B cell (primary cell): ENCODE measurements at regions of chr6 and their contacts with region 1.

Region 1: GRCh38 chr6:166296035-166296883 is 11.9 kb downstream of the PRR18 start:
- DNase-seq: no peak
- ATAC-seq: no peak
- H3K4me3 ChIP-seq: no peak overlapping the region
- H3K4me3 Mint-ChIP-seq: no peak overlapping the region
- H3K27ac ChIP-seq: no peak overlapping the region
- H3K27ac Mint-ChIP-seq: no peak overlapping the region
- H3K4me1 ChIP-seq: peaks cover 5 to 10% of the 10 kb centered on the region in 2 donors
- H3K4me1 Mint-ChIP-seq: peaks cover 19% of the 10 kb centered on the region
- H3K27me3 ChIP-seq: peaks cover 0 to 3% (median 0%) of the 10 kb centered on the region in 4 experiments
- H3K27me3 Mint-ChIP-seq: peaks cover 26% of the 10 kb centered on the region
- CTCF ChIP-seq: no peak

Region 2: DNA sequence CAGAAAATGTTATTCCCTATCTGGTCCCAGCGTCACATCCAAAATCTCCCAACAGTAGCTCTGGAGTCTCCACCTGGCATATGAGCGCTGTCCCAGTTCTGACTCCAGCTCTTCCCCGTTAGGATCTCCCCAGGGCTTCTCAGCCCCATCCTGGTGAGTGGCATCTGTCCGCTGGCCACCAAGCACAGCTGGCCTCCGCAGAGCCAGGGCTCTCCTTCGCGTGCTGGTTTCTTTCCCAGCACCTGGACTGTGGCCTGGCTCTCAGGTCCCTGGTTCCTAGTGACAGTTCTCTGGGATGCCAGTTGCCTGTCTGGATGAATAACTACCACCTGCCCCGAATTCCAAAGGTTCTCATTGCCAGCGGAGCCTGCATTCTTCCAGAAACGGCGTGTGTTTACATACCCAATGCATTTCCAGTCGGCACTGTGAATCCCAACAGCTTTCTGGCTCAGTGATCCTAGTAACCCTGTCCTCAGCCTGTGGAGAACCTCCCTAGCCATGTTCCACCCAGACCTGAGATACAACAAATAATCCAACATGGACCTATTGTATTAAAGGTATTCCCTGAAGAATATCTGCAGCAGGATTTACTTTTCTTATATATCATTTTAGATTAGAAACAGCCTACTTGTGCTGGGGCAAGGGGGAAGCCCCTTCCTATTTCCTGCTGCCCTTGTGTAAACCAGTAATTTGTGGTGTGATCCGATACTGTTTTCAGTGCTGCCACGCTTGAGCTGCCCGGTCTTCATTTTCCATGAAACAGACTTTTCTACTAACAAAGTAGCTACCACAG is 563.4 kb before region 1 on chr6:
- CTCF ChIA-PET with region 1: no interaction called
- POLR2A ChIA-PET with region 1: no interaction called
- intact Hi-C with region 1: no loop called
- DNase-seq: no peak
- ATAC-seq: no peak
- H3K4me3 ChIP-seq: no peak overlapping the region
- H3K4me3 Mint-ChIP-seq: no peak overlapping the region
- H3K27ac ChIP-seq: no peak overlapping the region
- H3K27ac Mint-ChIP-seq: no peak overlapping the region
- H3K4me1 ChIP-seq: no peaks in the 10 kb centered on the region
- H3K4me1 Mint-ChIP-seq: no peaks in the 10 kb centered on the region
- H3K27me3 ChIP-seq: peaks cover 0 to 3% (median 0%) of the 10 kb centered on the region in 4 experiments
- H3K27me3 Mint-ChIP-seq: no peaks in the 10 kb centered on the region
- CTCF ChIP-seq: no peak

Region 3: GRCh38 chr6:166275714-166276166 is 20.5 kb before region 1 on chr6:
- CTCF ChIA-PET with region 1: interaction called, 10 read pairs
- POLR2A ChIA-PET with region 1: no interaction called
- intact Hi-C with region 1: no loop called
- DNase-seq: peak; percentile 82
- ATAC-seq: peak; percentile 89
- H3K4me3 ChIP-seq: no peak overlapping the region
- H3K4me3 Mint-ChIP-seq: no peak overlapping the region
- H3K27ac ChIP-seq: no peak overlapping the region
- H3K27ac Mint-ChIP-seq: no peak overlapping the region
- H3K4me1 ChIP-seq: peaks cover 0 to 8% of the 10 kb centered on the region in 2 donors
- H3K4me1 Mint-ChIP-seq: peaks cover 14% of the 10 kb centered on the region
- H3K27me3 ChIP-seq: no peaks in the 10 kb centered on the region
- H3K27me3 Mint-ChIP-seq: peaks cover 2% of the 10 kb centered on the region
- CTCF ChIP-seq: peak; percentile 100